RWPE1 (cell line): ENCODE measurements at regions of chr11 and their contacts with region 1.

Region 1: DNA sequence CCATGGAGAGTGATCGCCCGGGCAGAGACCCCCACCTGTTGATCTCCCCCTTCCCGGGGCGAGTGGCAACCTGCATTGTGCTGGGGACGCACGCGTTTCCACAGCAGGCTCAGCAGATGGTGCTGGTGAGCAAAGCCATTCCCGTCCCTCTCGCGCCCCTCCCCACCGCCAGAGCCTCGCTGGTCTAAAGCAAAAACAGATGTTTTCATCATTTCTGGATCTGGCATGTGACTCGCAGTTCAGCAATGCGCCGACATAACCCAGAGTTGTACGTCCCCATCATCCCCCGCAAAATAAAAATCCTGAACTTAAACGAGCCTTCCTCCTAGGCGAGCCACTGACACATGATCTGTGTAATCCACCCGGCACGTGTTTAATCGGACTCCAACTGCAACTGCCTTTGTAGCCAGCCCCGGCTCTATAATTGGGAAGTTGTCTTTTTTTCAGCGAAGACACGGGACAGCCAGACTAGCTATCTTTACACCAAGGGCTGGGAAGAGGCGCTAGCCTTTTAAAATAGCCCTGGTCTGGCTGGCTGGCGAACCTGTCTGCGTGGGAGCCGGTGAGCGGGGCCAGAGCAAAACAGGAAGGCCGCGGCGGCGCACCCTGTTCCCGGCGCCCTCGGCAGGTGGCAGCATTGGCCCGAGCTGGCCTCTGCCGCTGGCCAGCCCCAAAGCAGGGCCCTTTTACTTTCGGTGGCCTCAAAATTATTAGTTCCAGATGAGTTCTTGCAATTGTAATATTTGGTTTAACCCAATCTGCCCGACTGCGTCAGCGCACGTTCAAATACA is 203.0 kb upstream of the SORL1-AS1 start:
- DNase-seq: peak; percentile 81
- H3K27ac ChIP-seq: peak overlapping the region; percentile 84
- CTCF ChIP-seq: peak; percentile 89

Region 2: GRCh38 chr11:121667836-121668235 is 12.1 kb after region 1 on chr11:
- CTCF ChIA-PET with region 1: interaction called, 11 read pairs
- POLR2A ChIA-PET with region 1: no interaction called
- DNase-seq: no peak
- H3K27ac ChIP-seq: no peak overlapping the region
- CTCF ChIP-seq: no peak

Region 3: DNA sequence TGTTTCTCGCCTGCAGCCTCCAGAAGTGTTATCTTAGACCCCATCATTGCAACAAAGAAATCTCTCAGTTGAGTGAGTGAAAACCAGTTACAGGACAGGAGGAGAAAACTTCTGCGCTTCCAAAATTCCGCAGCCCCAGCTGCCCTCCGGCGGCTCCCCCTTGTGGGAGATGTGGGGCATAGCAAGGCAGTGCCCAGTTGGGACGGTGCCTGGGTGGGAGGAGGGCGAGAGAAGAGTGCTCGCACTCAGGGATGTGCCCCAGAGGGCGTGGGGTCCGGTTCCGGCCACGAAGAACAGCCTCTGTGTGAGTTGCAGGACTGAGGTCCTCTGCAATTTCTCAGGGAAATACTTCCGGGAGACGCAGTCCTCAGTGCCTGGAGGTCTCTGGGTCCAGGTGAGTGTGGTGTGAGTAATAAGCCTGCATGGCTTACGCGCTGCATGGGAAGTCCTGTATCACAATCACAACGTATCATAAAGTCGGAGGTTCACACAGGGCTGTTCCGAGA is 547.3 kb after region 1 on chr11:
- CTCF ChIA-PET with region 1: interaction called, 24 read pairs
- POLR2A ChIA-PET with region 1: no interaction called
- DNase-seq: peak; percentile 81
- H3K27ac ChIP-seq: peak overlapping the region; percentile 83
- CTCF ChIP-seq: peak; percentile 98

Region 4: DNA sequence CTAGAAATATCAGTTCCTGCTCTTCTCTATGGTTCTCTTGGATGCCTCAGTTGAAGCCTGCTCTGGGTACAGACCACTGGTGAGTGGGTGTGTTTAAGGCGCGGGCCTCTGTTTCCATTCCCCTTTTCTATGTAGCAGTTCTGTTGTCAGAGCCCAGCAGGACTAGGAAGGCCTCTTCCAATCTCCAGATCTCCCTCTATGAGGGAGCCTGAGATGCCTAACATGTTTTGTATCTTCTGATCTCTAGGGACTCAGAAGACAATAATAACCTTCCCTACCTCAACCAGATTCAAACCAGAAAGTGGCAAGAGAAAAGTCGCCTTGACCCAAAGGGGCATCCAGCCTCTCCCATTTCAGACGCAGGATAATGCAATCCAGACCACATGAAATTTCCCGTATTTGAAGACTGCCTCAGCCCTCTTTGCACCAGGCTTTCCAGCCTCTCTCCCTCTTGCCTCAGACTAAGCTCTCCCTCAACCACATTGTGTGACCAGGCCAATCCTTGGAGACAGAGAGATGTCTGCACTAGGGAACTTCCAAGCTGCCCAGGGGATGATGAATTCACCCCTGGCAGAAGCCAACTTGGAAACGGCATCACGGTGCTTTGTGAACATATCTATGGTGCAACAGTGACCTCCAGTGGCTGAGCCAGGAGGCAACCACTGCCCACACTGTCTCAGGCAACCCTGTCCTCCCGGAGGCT is 849.7 kb after region 1 on chr11:
- CTCF ChIA-PET with region 1: interaction called, 19 read pairs
- POLR2A ChIA-PET with region 1: no interaction called
- DNase-seq: peak; percentile 80
- H3K27ac ChIP-seq: no peak overlapping the region
- CTCF ChIP-seq: peak; percentile 81